ENCODE measurements at regions of chr10 and their contacts with region 1.

Region 1: DNA sequence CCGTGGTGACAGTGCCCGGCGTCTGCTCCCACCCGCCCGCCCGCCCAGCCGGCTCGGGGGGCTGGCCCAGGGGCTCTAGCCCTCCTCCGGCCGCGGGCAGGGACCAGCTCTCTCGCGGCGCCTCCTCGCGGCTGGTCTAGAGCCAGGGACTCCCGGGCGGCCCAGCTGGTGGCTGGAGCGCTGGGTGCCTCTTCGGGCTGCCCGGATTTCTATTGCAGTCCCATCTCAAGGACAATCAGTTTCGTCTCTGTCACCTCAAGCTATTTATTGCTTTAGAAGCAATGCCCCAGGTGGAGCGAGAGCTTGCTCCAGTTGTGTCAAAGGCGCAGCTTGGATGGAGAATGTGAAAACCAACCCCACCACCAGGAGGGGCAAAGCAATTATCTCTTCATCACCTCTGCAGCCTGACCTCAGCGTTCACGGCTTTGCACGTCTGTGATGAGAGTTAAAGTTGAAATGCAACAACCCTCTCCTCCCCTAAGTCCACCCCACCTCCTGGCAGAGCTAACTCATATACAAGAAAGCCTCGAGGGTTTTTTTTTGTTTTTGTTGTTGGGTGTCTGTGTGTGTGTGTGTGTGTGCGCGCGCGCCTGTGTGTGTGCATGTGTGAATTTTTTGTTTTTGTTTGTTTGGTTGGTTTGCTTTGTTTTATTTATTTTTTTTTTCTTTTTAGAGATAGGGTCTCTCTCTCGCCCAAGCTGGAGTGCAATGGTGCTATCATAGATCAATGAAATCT is at the start of gene ITGA8:
- DNase-seq: peak in 1 of 2 donors; percentile 85
- H3K4me3 ChIP-seq: peak within 1 kb of the TSS; percentile 85 to 97
- H3K27ac ChIP-seq: peak within 1 kb of the TSS; percentile 94 to 95
- H3K4me1 ChIP-seq: peaks cover 0 to 66% (median 21%) of the 10 kb centered on the region in 4 donors
- H3K27me3 ChIP-seq: no peaks in the 10 kb centered on the region
- CTCF ChIP-seq: peak; percentile 67 to 70

Region 2: GRCh38 chr10:15046626-15047025 is 673.4 kb before region 1 on chr10:
- intact Hi-C with region 1: no loop called
- DNase-seq: no peak
- H3K4me3 ChIP-seq: peak overlapping the region in 1 of 2 donors; percentile 30
- H3K27ac ChIP-seq: peak overlapping the region; percentile 49 to 69
- H3K4me1 ChIP-seq: peaks cover 6 to 22% (median 11%) of the 10 kb centered on the region in 4 donors
- H3K27me3 ChIP-seq: no peaks in the 10 kb centered on the region
- CTCF ChIP-seq: no peak

Region 3: DNA sequence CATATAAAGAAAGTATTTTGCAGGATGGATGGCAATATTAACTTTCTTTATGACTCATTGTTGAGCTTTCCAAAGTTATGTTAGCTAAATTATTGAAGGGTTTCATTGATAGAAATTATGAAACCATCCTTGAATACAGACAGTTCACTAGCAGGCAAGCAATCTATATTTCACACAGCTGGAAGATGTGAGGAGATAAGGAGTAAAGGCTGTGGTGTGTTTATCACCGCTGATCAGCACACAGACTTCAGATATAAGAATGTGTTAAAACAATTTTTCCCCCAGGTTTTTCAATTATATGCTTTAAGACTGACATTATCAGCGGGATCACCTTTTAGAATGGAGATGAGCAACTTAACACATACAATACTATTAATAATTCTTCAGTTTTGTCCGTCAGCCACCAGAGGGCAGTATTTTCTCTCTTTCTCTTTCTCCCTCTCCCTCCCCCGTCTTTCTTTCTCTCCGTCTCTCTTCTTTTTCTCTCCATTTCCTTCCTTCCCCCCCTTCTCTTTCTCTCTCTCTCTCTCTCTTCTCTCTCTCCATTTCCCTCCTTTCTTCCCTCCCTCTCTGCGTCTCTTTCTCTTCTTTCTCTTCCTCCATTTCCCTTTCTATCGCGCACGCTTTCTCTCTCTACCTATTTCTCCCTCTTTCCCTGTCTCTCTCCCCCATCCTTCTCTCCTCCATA is 286.1 kb before region 1 on chr10:
- intact Hi-C with region 1: loop called (anchors 5 kb)
- DNase-seq: no peak
- H3K4me3 ChIP-seq: peak overlapping the region; percentile 45 to 46
- H3K27ac ChIP-seq: peak overlapping the region; percentile 54 to 57
- H3K4me1 ChIP-seq: peaks cover 0 to 34% (median 5%) of the 10 kb centered on the region in 4 donors
- H3K27me3 ChIP-seq: no peaks in the 10 kb centered on the region
- CTCF ChIP-seq: peak; percentile 70 to 86

Region 4: DNA sequence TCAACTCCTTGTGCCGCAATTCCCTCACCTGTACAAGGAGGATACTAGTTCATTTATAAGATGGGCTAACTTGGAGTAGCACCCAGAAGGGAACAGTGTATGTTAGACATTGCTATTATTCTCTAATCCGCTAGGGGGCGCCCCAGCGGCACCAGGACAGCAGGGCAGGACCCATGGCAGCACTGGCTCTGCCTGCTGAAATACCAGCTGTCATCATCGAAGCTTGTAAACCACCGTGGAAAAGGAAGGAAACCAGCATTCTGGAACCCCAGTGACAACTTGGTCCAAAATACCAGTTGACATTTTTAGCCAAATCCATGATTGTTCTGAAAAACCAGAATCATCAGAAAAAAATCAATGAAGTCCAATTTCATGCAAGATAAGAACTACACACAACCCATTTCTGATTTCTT is 134.8 kb before region 1 on chr10:
- intact Hi-C with region 1: loop called (anchors 5 kb)
- DNase-seq: peak; percentile 52 to 80
- H3K4me3 ChIP-seq: no peak overlapping the region
- H3K27ac ChIP-seq: peak overlapping the region; percentile 1 to 16
- H3K4me1 ChIP-seq: peaks cover 0 to 9% (median 0%) of the 10 kb centered on the region in 4 donors
- H3K27me3 ChIP-seq: no peaks in the 10 kb centered on the region
- CTCF ChIP-seq: peak; percentile 81 to 84

Region 5: DNA sequence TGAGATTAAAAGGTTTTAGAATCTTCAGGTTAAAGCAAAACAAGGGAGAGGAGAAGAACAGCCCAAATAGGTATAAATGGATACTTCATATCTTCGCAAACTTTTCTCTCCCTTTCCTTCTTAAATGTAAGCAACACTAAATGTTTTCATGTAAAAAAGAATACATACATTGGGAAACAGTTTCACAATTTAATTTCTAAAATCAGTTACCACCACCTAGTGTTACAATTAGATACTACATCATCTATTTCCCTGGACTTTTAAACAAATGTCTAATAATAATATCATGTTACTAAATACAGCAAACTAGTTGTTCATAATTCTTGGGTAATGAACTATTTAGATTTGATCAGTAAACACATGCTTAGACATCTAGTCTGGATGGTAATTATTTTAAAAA is 104.4 kb after region 1 on chr10:
- intact Hi-C with region 1: loop called (anchors 5 kb)
- DNase-seq: no peak
- H3K4me3 ChIP-seq: no peak overlapping the region
- H3K27ac ChIP-seq: no peak overlapping the region
- H3K4me1 ChIP-seq: peaks cover 0 to 11% (median 0%) of the 10 kb centered on the region in 4 donors
- H3K27me3 ChIP-seq: no peaks in the 10 kb centered on the region
- CTCF ChIP-seq: peak; percentile 61 to 66